ENCODE measurements at regions of chr1 and their contacts with region 1.

Region 1: DNA sequence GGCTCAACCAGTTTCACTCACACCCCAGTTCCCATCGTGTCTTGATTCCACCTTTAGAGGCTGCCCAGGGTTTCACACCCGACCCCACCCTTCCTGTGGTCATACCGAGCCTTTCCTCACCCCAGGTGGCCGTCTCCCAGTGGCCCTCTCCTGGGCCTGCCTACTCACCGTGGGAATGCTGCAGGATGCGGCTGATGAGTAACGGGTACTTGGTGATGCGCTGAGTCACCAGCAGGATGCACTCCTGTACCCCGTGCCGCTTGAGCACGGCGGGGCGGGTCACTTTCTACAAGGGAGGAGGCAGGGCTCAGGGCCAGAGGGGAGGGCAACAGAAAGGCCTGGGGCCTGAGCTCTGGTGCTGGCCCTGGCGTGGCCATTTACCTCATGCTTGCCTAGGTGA is 16.4 kb downstream of the ARHGEF2 start:
- DNase-seq: peak; percentile 85 to 95 (median 86)
- H3K4me3 ChIP-seq: peak overlapping the region in 1 of 3 experiments; percentile 5
- H3K4me3 Mint-ChIP-seq: peak overlapping the region in 1 of 2 donors; percentile 49
- H3K27ac ChIP-seq: peak overlapping the region; percentile 91 to 93
- H3K27ac Mint-ChIP-seq: peak overlapping the region; percentile 93 to 99 (median 97)
- H3K4me1 ChIP-seq: peaks cover 50 to 51% of the 10 kb centered on the region in 2 donors
- H3K4me1 Mint-ChIP-seq: peaks cover 46% of the 10 kb centered on the region
- H3K27me3 ChIP-seq: no peaks in the 10 kb centered on the region
- H3K27me3 Mint-ChIP-seq: no peaks in the 10 kb centered on the region
- CTCF ChIP-seq: no peak

Region 2: DNA sequence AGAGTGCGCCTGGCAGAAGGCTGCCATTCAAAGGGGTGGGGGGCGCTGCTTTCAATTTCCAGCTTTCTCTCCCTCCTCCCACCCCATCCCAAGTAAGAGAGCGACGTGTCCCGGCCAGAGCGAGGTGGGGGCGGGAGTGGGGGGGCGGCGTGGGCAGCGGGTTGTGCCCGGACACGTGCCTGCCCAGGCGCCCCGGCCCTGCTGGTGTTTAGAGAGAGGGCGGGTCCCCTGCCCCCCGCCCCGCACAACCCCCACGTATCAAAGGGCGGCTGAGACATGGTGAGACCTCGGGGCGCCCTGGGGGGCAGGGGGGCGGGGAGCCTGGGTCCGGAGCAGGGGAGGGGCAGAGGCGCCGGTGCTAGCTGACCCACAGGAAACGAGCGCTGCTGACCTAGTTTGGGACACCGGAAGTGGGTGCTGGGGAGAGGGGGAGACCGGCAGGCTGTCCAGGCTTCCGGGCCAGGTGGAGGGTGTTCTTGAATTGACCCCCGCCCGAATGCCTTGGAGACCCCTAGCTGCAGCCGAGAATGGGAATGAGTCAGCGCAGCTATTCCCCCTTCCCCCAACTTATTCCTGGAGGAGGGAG is 958.1 kb before region 1 on chr1:
- intact Hi-C with region 1: no loop called
- DNase-seq: peak in 1 of 3 donors; percentile 37
- H3K4me3 ChIP-seq: peak overlapping the region; percentile 84 to 100 (median 99)
- H3K4me3 Mint-ChIP-seq: peak overlapping the region; percentile 95 to 98
- H3K27ac ChIP-seq: peak overlapping the region; percentile 91 to 99
- H3K27ac Mint-ChIP-seq: peak overlapping the region; percentile 92 to 100 (median 98)
- H3K4me1 ChIP-seq: peaks cover 61 to 74% of the 10 kb centered on the region in 2 donors
- H3K4me1 Mint-ChIP-seq: peaks cover 47% of the 10 kb centered on the region
- H3K27me3 ChIP-seq: no peaks in the 10 kb centered on the region
- H3K27me3 Mint-ChIP-seq: peaks cover 0 to 2% (median 0%) of the 10 kb centered on the region in 3 donors
- CTCF ChIP-seq: no peak

Region 3: GRCh38 chr1:155934097-155934935 is 27.6 kb before region 1 on chr1 and contains the start of gene KHDC4:
- intact Hi-C with region 1: no loop called
- DNase-seq: peak; percentile 98 to 99 (median 99)
- H3K4me3 ChIP-seq: peak within 1 kb of the TSS; percentile 63 to 96 (median 94)
- H3K4me3 Mint-ChIP-seq: no peak within 1 kb of the TSS
- H3K27ac ChIP-seq: peak within 1 kb of the TSS; percentile 88 to 94
- H3K27ac Mint-ChIP-seq: peak within 1 kb of the TSS in 1 of 7 donors; percentile 87
- H3K4me1 ChIP-seq: peaks cover 22 to 44% of the 10 kb centered on the region in 2 donors
- H3K4me1 Mint-ChIP-seq: peaks cover 25% of the 10 kb centered on the region
- H3K27me3 ChIP-seq: no peaks in the 10 kb centered on the region
- H3K27me3 Mint-ChIP-seq: peaks cover 0 to 2% (median 0%) of the 10 kb centered on the region in 3 donors
- CTCF ChIP-seq: peak; percentile 28
- polyA plus RNA-seq, gene KHDC4: 3.4 to 22.0 (median 3.5) TPM

Region 4: GRCh38 chr1:155946633-155947219 is 15.2 kb before region 1 on chr1:
- intact Hi-C with region 1: loop called in 1 of 2 experiments (anchors 2 kb)
- DNase-seq: no peak
- H3K4me3 ChIP-seq: peak overlapping the region in 1 of 3 experiments; percentile 59
- H3K4me3 Mint-ChIP-seq: peak overlapping the region in 1 of 2 donors; percentile 64
- H3K27ac ChIP-seq: peak overlapping the region; percentile 75 to 81
- H3K27ac Mint-ChIP-seq: peak overlapping the region; percentile 85 to 97 (median 94)
- H3K4me1 ChIP-seq: peaks cover 76 to 83% of the 10 kb centered on the region in 2 donors
- H3K4me1 Mint-ChIP-seq: peaks cover 71% of the 10 kb centered on the region
- H3K27me3 ChIP-seq: no peaks in the 10 kb centered on the region
- H3K27me3 Mint-ChIP-seq: peaks cover 0 to 2% (median 0%) of the 10 kb centered on the region in 3 donors
- CTCF ChIP-seq: no peak

Region 5: DNA sequence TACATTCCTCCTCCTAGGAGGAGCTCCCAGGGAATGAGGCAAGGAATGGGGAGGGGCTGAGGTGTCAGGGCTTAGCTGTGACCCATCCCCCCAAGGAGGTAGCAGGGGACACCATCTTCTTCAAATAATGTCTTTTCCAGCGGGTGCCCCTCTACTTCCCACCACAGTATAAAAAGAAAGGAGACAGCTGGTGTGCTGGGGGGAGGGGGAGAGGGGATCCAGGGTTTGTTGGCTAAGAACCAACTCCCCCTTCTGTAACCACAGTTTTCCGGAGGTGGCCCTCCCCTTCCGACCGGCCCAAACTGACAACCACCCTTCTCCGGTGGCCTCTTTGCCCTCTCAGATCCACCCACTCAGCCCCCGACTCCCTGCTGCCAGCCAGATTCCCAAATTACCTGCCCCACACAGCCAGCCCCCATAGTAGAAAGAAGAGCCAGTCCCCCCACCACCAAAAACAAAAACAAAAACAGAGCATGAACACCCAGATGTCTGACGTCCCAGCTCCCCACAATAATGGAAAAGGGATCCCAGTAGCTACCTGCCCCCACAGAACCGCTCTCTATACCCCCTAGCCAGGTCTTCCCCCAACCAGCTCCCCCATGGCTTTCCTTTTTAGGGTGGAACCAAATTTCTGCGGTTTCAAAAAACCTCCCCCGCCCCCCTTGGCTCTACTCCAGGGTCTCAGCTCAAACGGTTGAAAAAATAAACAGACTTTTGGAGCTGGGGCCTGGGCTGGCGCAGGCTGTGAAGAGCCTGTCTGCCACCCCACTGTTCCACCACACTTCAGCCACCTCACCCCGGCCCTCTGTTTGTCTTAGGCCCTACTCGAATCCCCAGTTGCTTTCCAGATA is 14.3 kb after region 1 on chr1:
- intact Hi-C with region 1: loop called in 1 of 2 experiments (anchors 2 kb)
- DNase-seq: no peak
- H3K4me3 ChIP-seq: peak overlapping the region; percentile 93 to 96 (median 94)
- H3K4me3 Mint-ChIP-seq: peak overlapping the region; percentile 96 to 98
- H3K27ac ChIP-seq: peak overlapping the region; percentile 81 to 97
- H3K27ac Mint-ChIP-seq: peak overlapping the region; percentile 91 to 99 (median 96)
- H3K4me1 ChIP-seq: peaks cover 73 to 87% of the 10 kb centered on the region in 2 donors
- H3K4me1 Mint-ChIP-seq: peaks cover 70% of the 10 kb centered on the region
- H3K27me3 ChIP-seq: no peaks in the 10 kb centered on the region
- H3K27me3 Mint-ChIP-seq: peaks cover 0 to 8% (median 1%) of the 10 kb centered on the region in 3 donors
- CTCF ChIP-seq: no peak

Region 6: GRCh38 chr1:156001682-156002171 is 39.8 kb after region 1 on chr1:
- intact Hi-C with region 1: no loop called
- DNase-seq: no peak
- H3K4me3 ChIP-seq: no peak overlapping the region
- H3K4me3 Mint-ChIP-seq: no peak overlapping the region
- H3K27ac ChIP-seq: no peak overlapping the region
- H3K27ac Mint-ChIP-seq: peak overlapping the region in 2 of 7 donors; percentile 4 to 42
- H3K4me1 ChIP-seq: peaks cover 5 to 8% of the 10 kb centered on the region in 2 donors
- H3K4me1 Mint-ChIP-seq: peaks cover 6% of the 10 kb centered on the region
- H3K27me3 ChIP-seq: no peaks in the 10 kb centered on the region
- H3K27me3 Mint-ChIP-seq: peaks cover 0 to 3% (median 2%) of the 10 kb centered on the region in 3 donors
- CTCF ChIP-seq: no peak